ENCODE measurements at regions of chr14 and their contacts with region 1.

Region 1: GRCh38 chr14:48970803-48971394 is 615.3 kb downstream of the RPS29 start:
- DNase-seq: no peak
- H3K4me3 Mint-ChIP-seq: no peak overlapping the region
- H3K27ac Mint-ChIP-seq: peak overlapping the region; percentile 79
- H3K4me1 Mint-ChIP-seq: peaks cover 11% of the 10 kb centered on the region
- H3K27me3 Mint-ChIP-seq: no peaks in the 10 kb centered on the region

Region 2: GRCh38 chr14:48900565-48900964 is 70.3 kb before region 1 on chr14:
- intact Hi-C with region 1: loop called (anchors 10 kb)
- DNase-seq: no peak
- H3K4me3 Mint-ChIP-seq: no peak overlapping the region
- H3K27ac Mint-ChIP-seq: no peak overlapping the region
- H3K4me1 Mint-ChIP-seq: no peaks in the 10 kb centered on the region
- H3K27me3 Mint-ChIP-seq: no peaks in the 10 kb centered on the region